Activated CD8-positive, alpha-beta T cell treated with anti-CD3 and anti-CD28 coated beads for 36 hours (primary cell): ENCODE measurements at regions of chr10 and their contacts with region 1.

Region 1: DNA sequence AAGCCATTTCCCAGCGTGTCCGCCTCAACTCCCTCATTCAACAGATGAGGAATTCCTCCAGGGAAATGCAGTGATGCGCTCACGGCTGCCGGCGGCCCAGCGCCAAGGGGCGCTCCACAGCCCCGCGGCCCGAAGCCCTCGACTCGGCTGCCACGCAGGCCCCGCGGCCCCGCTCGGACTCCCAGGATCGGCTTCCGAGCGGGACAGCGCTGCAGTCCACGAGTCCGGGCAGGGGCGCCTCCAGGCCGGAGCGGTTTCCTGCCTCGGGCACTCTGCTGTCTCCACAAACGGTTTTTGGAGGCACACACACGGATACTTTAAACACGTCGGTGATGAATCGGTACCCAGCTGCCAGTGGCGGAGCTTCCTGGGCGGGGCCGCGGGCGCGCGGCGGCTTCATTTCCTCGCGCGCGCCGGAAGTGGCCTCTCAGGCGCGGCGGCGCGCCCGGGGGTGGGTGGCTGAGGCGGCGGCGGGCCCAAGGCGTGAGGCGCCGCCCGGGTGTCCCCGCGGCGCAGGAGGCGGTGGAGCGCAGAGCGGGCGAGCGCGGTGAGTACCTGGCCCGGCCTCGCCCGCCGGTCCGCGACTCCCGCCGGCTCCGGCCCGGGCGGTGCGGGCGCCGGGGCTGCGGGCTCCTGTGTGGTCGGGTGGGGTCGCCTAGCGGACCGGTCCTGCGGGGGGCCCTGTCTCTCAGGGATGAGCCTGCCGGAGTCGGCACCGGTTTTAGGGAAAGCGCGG is at the start of gene CSGALNACT2:
- DNase-seq: peak; percentile 92
- ATAC-seq: peak; percentile 70
- H3K4me3 Mint-ChIP-seq: peak within 1 kb of the TSS; percentile 91
- H3K27ac Mint-ChIP-seq: peak within 1 kb of the TSS; percentile 97
- H3K4me1 Mint-ChIP-seq: peaks cover 41% of the 10 kb centered on the region
- H3K27me3 Mint-ChIP-seq: no peaks in the 10 kb centered on the region
- CTCF ChIP-seq: no peak
- total RNA-seq, gene CSGALNACT2: 15.3 to 15.5 TPM

Region 2: GRCh38 chr10:43120929-43121314 is 17.3 kb before region 1 on chr10:
- CTCF ChIA-PET with region 1: interaction called, 6 read pairs
- POLR2A ChIA-PET with region 1: interaction called, 34 read pairs
- intact Hi-C with region 1: no loop called
- DNase-seq: peak; percentile 88
- ATAC-seq: peak; percentile 99
- H3K4me3 Mint-ChIP-seq: peak overlapping the region; percentile 13
- H3K27ac Mint-ChIP-seq: peak overlapping the region; percentile 89
- H3K4me1 Mint-ChIP-seq: peaks cover 24% of the 10 kb centered on the region
- H3K27me3 Mint-ChIP-seq: no peaks in the 10 kb centered on the region
- CTCF ChIP-seq: no peak

Region 3: DNA sequence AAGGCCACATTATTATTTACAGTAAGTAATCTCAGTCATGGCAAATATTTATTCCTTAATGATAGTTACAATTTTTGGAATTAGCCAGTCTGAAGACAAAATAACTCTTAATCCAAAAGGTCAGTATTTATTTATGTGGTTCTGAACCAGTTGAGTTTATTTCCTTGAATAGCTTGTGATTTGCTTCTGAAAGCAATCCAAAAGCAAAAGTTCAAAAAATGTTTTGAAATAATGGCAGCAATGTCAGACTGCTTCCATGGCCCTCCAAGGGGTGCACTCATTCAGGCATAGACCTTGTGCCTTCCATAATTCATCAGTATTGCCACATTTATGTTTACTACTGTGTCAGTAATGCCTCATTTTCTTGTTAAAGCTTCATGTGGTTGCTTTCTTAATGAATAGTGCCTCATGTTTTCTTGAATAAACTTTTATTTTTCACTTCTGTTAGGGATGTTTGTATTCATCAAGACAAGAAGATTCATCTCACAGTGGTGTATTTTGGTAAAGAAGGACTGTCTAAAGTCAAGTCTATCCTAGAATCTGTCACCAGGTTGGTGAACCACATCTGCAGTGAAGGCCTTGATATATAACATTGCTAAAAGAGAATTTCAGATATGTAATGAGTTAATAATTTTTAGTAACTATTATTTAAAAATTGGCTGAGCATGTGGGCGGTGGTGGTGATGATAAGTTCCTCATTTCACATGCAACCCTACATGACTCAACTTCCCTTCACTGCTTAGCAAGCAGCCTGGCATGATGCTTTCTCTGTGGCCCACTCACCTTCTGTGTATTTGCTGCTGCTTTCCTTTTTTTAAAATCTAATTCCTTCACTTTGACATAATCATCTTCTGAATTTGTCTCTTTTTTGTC is 22.1 kb after region 1 on chr10:
- CTCF ChIA-PET with region 1: interaction called, 6 read pairs
- POLR2A ChIA-PET with region 1: interaction called, 8 read pairs
- intact Hi-C with region 1: loop called (anchors 2 kb)
- DNase-seq: peak; percentile 78
- ATAC-seq: peak; percentile 87
- H3K4me3 Mint-ChIP-seq: no peak overlapping the region
- H3K27ac Mint-ChIP-seq: peak overlapping the region; percentile 89
- H3K4me1 Mint-ChIP-seq: peaks cover 61% of the 10 kb centered on the region
- H3K27me3 Mint-ChIP-seq: no peaks in the 10 kb centered on the region
- CTCF ChIP-seq: no peak

Region 4: DNA sequence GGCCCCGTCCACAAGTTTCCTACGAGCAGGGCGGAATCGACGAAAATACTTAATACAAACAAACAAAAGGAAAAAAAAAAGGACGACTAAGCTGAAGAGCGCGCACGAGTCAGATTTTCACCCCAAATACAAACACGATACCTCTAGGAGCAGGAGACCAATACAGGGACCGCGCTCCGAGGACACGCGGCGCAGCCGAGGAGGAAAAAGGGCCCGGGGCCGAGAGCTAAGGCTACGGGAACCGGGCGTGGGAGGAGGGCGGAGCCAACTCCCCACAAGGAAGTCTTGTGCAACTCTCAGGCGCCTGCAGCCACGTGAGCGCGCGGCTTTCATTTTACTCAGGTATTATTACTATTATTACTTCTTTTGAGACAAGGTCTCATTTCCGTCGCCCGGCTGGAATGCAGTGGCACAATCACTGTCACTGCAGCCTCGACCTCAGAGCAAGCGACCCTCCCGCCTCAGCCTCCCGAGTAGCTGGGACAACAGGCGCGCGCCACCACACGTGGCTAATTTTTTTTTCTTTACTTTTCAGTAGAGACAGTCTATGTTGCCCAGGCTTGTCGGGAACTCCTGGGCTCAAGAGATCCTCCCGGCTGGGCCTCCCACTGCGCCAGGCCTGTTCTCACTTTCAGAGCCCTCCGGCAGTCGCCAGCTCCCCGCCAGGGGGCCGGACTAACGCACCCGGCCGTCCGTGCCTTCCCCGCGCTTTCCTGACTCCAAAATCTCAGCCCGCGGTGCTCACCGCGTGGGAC is 269.6 kb after region 1 on chr10:
- CTCF ChIA-PET with region 1: no interaction called
- POLR2A ChIA-PET with region 1: interaction called, 5 read pairs
- intact Hi-C with region 1: loop called (anchors 5 kb)
- DNase-seq: peak; percentile 97
- ATAC-seq: peak; percentile 35
- H3K4me3 Mint-ChIP-seq: peak overlapping the region; percentile 99
- H3K27ac Mint-ChIP-seq: peak overlapping the region; percentile 100
- H3K4me1 Mint-ChIP-seq: peaks cover 24% of the 10 kb centered on the region
- H3K27me3 Mint-ChIP-seq: no peaks in the 10 kb centered on the region
- CTCF ChIP-seq: peak; percentile 56